Panc1 (cell line): ENCODE measurements at regions of chr10 and their contacts with region 1.

Region 1: DNA sequence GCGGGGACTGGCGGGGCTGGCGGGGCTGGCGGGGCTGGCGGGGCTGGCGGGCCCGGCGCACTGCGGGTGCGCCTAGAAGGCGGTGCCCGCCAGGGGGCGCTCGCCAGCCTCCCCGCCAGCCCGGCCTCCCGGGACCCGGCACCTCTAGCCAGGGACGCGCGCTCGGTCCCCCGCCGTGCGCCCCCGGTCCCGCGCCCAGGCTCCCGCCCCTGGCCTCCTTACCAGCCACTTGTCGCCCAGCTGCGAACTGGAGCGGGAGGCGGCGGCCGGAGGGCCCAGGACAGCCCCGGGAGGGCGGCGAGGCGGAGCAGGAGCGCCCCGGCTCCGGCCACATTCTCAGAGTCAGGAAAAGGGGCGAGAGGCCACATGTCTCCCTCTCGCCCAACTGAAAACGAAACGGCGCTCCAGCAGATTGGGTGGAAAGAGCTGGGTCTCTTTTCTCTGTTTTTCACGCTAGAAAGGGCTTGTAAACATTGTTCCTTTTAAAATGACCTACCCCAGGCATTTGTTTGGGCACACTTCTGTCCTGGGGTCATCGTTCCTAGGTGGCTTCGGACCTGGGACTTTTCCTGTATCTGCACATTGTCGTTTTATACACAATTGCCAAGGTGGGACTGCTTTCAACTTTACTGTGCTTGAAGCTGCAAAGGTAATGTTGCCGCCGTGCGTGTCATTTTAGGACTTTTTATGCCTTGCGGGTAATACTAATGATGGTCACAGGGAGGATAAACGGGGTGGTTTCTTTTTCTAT is 378 bp upstream of the PRKCQ start:
- DNase-seq: no peak
- ATAC-seq: peak; percentile 99
- H3K4me3 ChIP-seq: peak overlapping the region; percentile 41 to 56
- H3K27ac ChIP-seq: peak overlapping the region; percentile 39; the same call in 1 of the 2 replicates
- H3K4me1 ChIP-seq: no peaks in the 10 kb centered on the region
- H3K27me3 ChIP-seq: peaks cover 10% of the 10 kb centered on the region
- CTCF ChIP-seq: peak; percentile 83

Region 2: DNA sequence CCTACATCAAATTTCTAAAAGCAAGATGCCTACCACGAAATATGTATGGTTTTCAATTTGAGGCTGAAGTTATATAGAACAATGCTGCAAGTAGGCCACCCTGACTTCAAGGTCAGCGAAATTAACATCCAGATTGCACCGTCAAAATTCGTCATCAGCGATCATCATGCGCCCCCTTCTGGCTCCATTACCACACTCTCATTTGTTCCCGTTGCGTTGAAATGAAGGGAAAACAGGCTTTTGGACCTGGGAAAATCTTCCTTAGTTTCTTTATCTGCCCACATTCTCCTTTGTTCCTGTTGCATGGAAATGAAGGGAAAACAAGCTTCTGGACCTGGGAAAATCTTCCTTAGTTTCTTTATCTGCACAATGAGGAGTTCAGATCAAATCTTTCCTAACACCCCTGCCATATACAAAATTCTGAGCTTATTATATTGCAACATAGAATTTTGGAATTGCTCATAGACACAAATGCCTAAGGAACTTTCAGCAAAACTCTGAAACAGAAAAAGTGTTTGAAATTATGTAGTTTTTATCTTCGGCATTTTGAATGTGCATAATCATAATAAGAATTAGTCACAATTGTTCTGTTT is 97.9 kb after region 1 on chr10:
- CTCF ChIA-PET with region 1: no interaction called
- POLR2A ChIA-PET with region 1: no interaction called
- in situ Hi-C with region 1: no loop called
- intact Hi-C with region 1: loop called (anchors 5 kb)
- DNase-seq: no peak
- ATAC-seq: no peak
- H3K4me3 ChIP-seq: no peak overlapping the region
- H3K27ac ChIP-seq: no peak overlapping the region
- H3K4me1 ChIP-seq: no peaks in the 10 kb centered on the region
- H3K27me3 ChIP-seq: peaks cover 4% of the 10 kb centered on the region
- CTCF ChIP-seq: peak; percentile 81